ENCODE measurements at regions of chr17 and their contacts with region 1.

Region 1: GRCh38 chr17:44006598-44007345 is 2.4 kb downstream of the NAGS start:
- DNase-seq: peak; percentile 96 to 98 (median 98)
- H3K4me3 ChIP-seq: peak overlapping the region; percentile 67 to 87 (median 80)
- H3K4me3 Mint-ChIP-seq: peak overlapping the region; percentile 86 to 94
- H3K27ac ChIP-seq: peak overlapping the region; percentile 51 to 76
- H3K27ac Mint-ChIP-seq: peak overlapping the region; percentile 80 to 89 (median 85)
- H3K4me1 ChIP-seq: peaks cover 41 to 47% of the 10 kb centered on the region in 2 donors
- H3K4me1 Mint-ChIP-seq: peaks cover 43% of the 10 kb centered on the region
- H3K27me3 ChIP-seq: peaks cover 30 to 45% of the 10 kb centered on the region in 2 donors
- H3K27me3 Mint-ChIP-seq: peaks cover 41 to 51% (median 46%) of the 10 kb centered on the region in 3 donors
- CTCF ChIP-seq: peak; percentile 21

Region 2: GRCh38 chr17:44044067-44044466 is 37.3 kb after region 1 on chr17:
- intact Hi-C with region 1: loop called in 1 of 2 experiments (anchors 5 kb)
- DNase-seq: peak in 2 of 3 donors; percentile 19 to 39
- H3K4me3 ChIP-seq: peak overlapping the region in 1 of 3 experiments; percentile 38
- H3K4me3 Mint-ChIP-seq: no peak overlapping the region
- H3K27ac ChIP-seq: peak overlapping the region in 1 of 2 donors; percentile 84
- H3K27ac Mint-ChIP-seq: peak overlapping the region; percentile 75 to 96 (median 89)
- H3K4me1 ChIP-seq: peaks cover 29 to 40% of the 10 kb centered on the region in 2 donors
- H3K4me1 Mint-ChIP-seq: peaks cover 37% of the 10 kb centered on the region
- H3K27me3 ChIP-seq: no peaks in the 10 kb centered on the region
- H3K27me3 Mint-ChIP-seq: peaks cover 0 to 2% (median 0%) of the 10 kb centered on the region in 3 donors
- CTCF ChIP-seq: no peak

Region 3: DNA sequence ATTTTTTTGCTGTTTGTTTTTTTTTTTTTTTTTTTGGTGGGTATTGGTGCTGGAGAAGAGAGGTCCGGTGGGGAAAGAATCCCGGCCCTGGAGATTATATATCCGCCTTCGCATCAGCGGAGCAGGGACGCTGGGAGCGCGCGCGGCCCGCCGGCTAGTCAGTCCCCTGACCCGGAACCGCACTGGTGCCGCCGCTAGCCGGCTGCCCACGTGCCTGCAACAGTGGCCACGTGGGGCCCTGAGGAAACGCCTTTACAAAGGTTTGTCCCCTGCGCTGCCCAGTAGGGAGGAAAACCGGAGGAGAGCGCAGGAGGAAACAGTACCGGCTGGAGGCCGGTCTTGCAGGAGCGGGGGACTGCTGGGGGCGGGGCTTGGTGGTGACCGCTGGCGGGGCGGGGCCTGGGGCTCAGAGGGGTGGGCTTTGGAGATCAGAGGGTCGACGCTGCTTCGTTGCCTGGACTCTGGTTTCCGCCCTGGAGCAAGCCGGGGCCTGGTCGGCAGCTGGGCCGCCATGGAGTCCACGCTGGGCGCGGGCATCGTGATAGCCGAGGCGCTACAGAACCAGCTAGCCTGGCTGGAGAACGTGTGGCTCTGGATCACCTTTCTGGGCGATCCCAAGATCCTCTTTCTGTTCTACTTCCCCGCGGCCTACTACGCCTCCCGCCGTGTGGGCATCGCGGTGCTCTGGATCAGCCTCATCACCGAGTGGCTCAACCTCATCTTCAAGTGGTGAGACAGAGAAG is 63.9 kb after region 1 on chr17 and contains the start of gene G6PC3:
- intact Hi-C with region 1: no loop called
- DNase-seq: peak; percentile 87 to 92 (median 89)
- H3K4me3 ChIP-seq: peak within 1 kb of the TSS; percentile 45 to 84 (median 65)
- H3K4me3 Mint-ChIP-seq: peak within 1 kb of the TSS; percentile 89 to 94
- H3K27ac ChIP-seq: peak within 1 kb of the TSS; percentile 86
- H3K27ac Mint-ChIP-seq: peak within 1 kb of the TSS; percentile 87 to 97 (median 94)
- H3K4me1 ChIP-seq: peaks cover 46 to 56% of the 10 kb centered on the region in 2 donors
- H3K4me1 Mint-ChIP-seq: peaks cover 49% of the 10 kb centered on the region
- H3K27me3 ChIP-seq: no peaks in the 10 kb centered on the region
- H3K27me3 Mint-ChIP-seq: peaks cover 0 to 1% (median 0%) of the 10 kb centered on the region in 3 donors
- CTCF ChIP-seq: no peak
- polyA plus RNA-seq, gene G6PC3: 38.0 to 46.4 (median 42.4) TPM

Measured in CD14-positive monocyte (primary cell).